ENCODE measurements at regions of chr15 and their contacts with region 1.

Region 1: DNA sequence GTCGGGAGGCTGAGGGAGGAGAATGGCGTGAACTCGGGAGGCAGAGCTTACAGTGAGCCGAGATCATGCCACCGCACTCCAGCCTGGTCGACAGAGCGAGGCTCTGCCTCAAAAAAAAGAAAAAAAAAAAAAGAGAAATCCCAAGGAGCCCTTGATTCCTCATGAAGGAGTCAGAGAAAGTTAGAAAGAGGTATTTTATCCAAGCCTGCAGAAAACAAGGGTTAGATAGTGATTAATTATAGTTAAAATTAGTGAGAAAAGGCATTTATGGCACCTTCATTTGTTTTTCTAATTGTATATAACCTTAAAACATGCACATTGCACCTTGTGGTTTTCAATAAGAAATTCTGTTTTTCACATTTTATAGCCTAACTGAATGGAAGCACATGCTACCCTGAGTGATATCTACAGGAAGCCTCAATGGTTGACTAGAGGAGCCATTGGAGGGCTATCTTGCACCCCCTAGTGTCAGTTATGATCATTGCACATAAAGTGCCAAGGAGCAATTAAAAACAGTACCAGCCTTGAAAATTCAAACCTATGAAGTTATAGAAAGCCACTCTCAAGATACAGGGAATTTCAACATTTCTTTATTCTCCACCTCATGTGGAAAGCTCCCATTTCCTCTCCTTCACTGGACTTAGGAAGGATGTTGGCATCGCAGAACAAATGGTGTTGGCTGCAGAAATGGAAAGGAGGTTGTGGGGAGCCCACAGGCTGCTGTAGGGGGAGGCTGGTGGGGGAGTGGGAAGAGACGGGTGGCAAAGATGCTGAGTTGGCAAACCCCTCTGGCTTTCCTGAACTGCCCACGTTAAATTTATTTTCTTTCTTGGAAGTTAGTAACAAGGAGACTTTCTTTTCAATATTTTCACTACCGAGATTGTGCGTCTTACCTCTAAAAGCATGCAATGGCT is 48.5 kb downstream of the ITGA11 start:
- DNase-seq: no peak
- ATAC-seq: peak; percentile 65
- H3K4me3 ChIP-seq: no peak overlapping the region
- H3K27ac ChIP-seq: peak overlapping the region; percentile 6 to 60
- H3K4me1 ChIP-seq: peaks cover 0 to 3% of the 10 kb centered on the region in 2 donors
- H3K27me3 ChIP-seq: no peaks in the 10 kb centered on the region

Region 2: GRCh38 chr15:68312701-68313204 is 70.7 kb before region 1 on chr15:
- intact Hi-C with region 1: loop called (anchors 5 kb)
- DNase-seq: peak in 1 of 2 donors; percentile 76
- ATAC-seq: no peak
- H3K4me3 ChIP-seq: no peak overlapping the region
- H3K27ac ChIP-seq: no peak overlapping the region
- H3K4me1 ChIP-seq: no peaks in the 10 kb centered on the region
- H3K27me3 ChIP-seq: no peaks in the 10 kb centered on the region